ENCODE measurements at regions of chr3 and their contacts with region 1.

Region 1: GRCh38 chr3:130457671-130458070 is 59.3 kb upstream of the COL6A6 start:
- DNase-seq: no peak
- H3K4me3 ChIP-seq: no peak overlapping the region
- H3K27ac ChIP-seq: no peak overlapping the region
- H3K4me1 ChIP-seq: no peaks in the 10 kb centered on the region
- H3K27me3 ChIP-seq: peaks cover 7% of the 10 kb centered on the region; the same call in 1 of the 2 replicates
- CTCF ChIP-seq: no peak

Region 2: GRCh38 chr3:130354430-130354829 is 103.2 kb before region 1 on chr3:
- CTCF ChIA-PET with region 1: no interaction called
- POLR2A ChIA-PET with region 1: no interaction called
- intact Hi-C with region 1: loop called (anchors 10 kb)
- DNase-seq: no peak
- H3K4me3 ChIP-seq: no peak overlapping the region
- H3K27ac ChIP-seq: no peak overlapping the region
- H3K4me1 ChIP-seq: no peaks in the 10 kb centered on the region
- H3K27me3 ChIP-seq: peaks cover 19% of the 10 kb centered on the region; the same call in 1 of the 2 replicates
- CTCF ChIP-seq: no peak